Breast epithelium (tissue), 4 donors: ENCODE measurements at regions of chr16 and their contacts with region 1.

Region 1: DNA sequence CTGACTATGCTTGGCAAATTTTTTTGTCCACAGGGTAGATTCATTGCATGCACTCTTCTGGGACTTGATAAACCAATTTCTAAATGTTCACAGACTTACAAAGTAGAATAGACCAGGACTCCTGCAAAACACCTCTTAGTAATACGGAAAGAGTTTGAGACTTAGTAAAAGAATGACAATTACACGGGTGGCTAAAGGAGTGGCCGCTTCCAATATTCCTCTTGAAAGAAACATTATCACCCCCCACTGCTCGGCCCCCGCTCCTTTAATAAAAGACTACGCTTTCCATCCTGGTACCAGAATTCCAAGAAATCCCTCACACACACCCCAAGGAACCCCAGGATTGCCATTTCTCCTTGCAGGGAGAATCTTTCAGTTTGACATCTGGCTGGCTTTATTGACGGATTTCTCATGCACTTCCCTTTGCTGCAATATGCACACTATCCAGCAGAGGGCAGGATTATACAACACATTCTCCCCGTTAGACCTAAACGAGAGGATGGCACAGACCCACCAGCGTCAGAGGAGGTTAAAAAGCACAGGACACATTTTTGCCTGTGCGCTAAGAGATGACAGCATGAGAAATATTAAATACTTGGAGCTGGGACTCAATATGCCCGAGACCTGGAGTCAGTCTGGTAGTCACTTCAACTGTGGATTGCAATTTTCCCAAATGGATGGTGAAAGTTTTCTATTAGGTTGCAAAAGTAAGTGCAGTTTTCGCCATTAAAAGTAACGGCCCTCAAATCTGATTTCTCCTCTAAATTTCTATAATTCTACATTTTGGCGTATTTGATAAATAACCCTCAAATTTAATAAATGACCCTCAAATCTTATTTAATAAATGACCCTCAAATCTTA is 46.6 kb upstream of the NUDT7 start:
- DNase-seq: peak in 1 of 2 donors; percentile 62
- H3K4me3 ChIP-seq: no peak overlapping the region
- H3K27ac ChIP-seq: no peak overlapping the region
- H3K4me1 ChIP-seq: no peaks in the 10 kb centered on the region
- H3K27me3 ChIP-seq: no peaks in the 10 kb centered on the region
- CTCF ChIP-seq: peak; percentile 92 to 96 (median 92)
- POLR2A ChIP-seq: no peak

Region 2: GRCh38 chr16:77971306-77972271 is 295.9 kb after region 1 on chr16:
- intact Hi-C with region 1: loop called (anchors 10 kb)
- DNase-seq: peak; percentile 57 to 81
- H3K4me3 ChIP-seq: no peak overlapping the region
- H3K27ac ChIP-seq: no peak overlapping the region
- H3K4me1 ChIP-seq: no peaks in the 10 kb centered on the region
- H3K27me3 ChIP-seq: no peaks in the 10 kb centered on the region
- CTCF ChIP-seq: peak; percentile 60 to 79 (median 71)
- POLR2A ChIP-seq: no peak